CD8-positive, alpha-beta T cell (primary cell): ENCODE measurements at regions of chr4 and their contacts with region 1.

Region 1: GRCh38 chr4:102826890-102827673 is at the start of gene UBE2D3:
- DNase-seq: peak; percentile 90 to 98 (median 95)
- ATAC-seq: peak; percentile 49
- H3K4me3 ChIP-seq: peak within 1 kb of the TSS; percentile 80 to 90
- H3K4me3 Mint-ChIP-seq: no peak within 1 kb of the TSS
- H3K27ac ChIP-seq: peak within 1 kb of the TSS; percentile 99 to 100
- H3K27ac Mint-ChIP-seq: no peak within 1 kb of the TSS
- H3K4me1 ChIP-seq: peaks cover 37% of the 10 kb centered on the region
- H3K4me1 Mint-ChIP-seq: peaks cover 39% of the 10 kb centered on the region
- H3K27me3 ChIP-seq: no peaks in the 10 kb centered on the region
- H3K27me3 Mint-ChIP-seq: no peaks in the 10 kb centered on the region
- CTCF ChIP-seq: no peak
- total RNA-seq, gene UBE2D3: 752 to 758 TPM

Region 2: GRCh38 chr4:102344954-102345794 is 481.9 kb before region 1 on chr4 and contains the start of gene SLC39A8:
- CTCF ChIA-PET with region 1: no interaction called
- POLR2A ChIA-PET with region 1: interaction called, 11 read pairs
- intact Hi-C with region 1: loop called (anchors 1 to 2 kb)
- DNase-seq: peak; percentile 67 to 94 (median 84)
- ATAC-seq: peak; percentile 80
- H3K4me3 ChIP-seq: peak within 1 kb of the TSS; percentile 65 to 85
- H3K4me3 Mint-ChIP-seq: peak within 1 kb of the TSS; percentile 92
- H3K27ac ChIP-seq: peak within 1 kb of the TSS; percentile 92 to 96
- H3K27ac Mint-ChIP-seq: peak within 1 kb of the TSS; percentile 96
- H3K4me1 ChIP-seq: peaks cover 33% of the 10 kb centered on the region
- H3K4me1 Mint-ChIP-seq: peaks cover 54% of the 10 kb centered on the region
- H3K27me3 ChIP-seq: no peaks in the 10 kb centered on the region
- H3K27me3 Mint-ChIP-seq: no peaks in the 10 kb centered on the region
- CTCF ChIP-seq: peak; percentile 90
- total RNA-seq, gene SLC39A8: 19.1 to 20.0 TPM

Region 3: DNA sequence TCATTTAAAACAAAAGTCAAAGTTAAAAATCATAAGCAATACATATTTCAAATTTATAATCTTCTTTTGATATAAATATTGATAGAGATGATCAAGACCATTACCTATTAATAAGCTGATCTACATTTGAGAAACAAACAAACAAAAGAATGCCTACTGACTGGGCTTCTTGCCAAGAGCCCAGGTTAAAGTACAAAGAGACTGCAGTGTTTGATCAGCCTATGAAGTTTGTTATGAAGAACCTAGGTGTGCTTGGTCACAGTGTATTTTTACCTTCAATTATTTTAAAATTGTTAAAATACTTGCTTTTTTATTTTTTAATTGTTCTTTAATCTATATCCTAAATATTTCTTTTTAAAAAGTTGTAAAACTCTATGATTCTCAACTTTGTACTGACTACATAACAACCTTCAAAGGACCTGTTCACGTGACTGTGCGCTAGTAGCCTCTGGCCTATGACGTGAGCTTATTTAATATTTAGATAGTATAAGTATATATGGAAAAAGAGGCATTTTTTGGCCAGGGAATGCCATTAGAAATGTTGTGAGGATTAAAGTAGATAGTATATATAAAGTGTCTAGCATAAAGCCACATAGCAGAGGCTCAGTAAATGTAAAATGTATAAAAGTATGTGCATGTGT is 470.4 kb before region 1 on chr4:
- CTCF ChIA-PET with region 1: no interaction called
- POLR2A ChIA-PET with region 1: no interaction called
- intact Hi-C with region 1: no loop called
- DNase-seq: no peak
- ATAC-seq: no peak
- H3K4me3 ChIP-seq: no peak overlapping the region
- H3K4me3 Mint-ChIP-seq: no peak overlapping the region
- H3K27ac ChIP-seq: no peak overlapping the region
- H3K27ac Mint-ChIP-seq: no peak overlapping the region
- H3K4me1 ChIP-seq: no peaks in the 10 kb centered on the region
- H3K4me1 Mint-ChIP-seq: peaks cover 3% of the 10 kb centered on the region
- H3K27me3 ChIP-seq: no peaks in the 10 kb centered on the region
- H3K27me3 Mint-ChIP-seq: no peaks in the 10 kb centered on the region
- CTCF ChIP-seq: no peak

Region 4: DNA sequence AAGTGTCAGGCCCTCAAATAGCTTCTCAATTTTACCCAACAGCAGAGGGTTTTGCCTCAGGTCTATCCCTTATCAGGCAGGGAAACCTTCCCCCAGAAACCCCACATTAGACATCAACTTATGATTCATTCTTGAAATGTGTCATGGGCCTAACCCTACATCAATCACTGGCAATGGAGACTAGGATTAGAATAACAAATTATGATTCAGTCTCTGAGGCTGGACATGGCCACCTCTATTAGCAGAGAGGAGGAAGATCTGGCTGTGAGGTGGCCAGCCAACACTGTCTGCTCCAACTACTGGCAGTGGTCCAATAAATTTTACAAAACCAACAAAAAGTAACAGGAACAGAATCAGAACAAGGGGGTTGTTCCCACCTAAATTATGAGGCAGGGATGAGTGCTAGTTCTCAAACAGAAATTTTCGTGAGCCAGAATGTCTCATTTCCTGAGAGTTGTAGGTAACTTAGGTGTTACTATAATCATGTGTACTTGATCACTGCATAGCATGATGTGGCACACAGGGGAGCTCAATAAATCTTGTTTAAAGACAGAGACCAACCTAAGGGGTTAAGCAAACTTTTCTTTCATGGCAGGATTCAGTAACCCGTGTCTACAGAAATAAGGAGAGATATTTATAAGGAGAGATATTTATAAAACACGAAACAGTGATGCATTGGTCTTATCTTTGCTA is 199.1 kb before region 1 on chr4:
- CTCF ChIA-PET with region 1: interaction called, 3 read pairs
- POLR2A ChIA-PET with region 1: interaction called, 18 read pairs
- intact Hi-C with region 1: loop called in 1 of 2 experiments (anchors 2 kb)
- DNase-seq: no peak
- ATAC-seq: no peak
- H3K4me3 ChIP-seq: no peak overlapping the region
- H3K4me3 Mint-ChIP-seq: no peak overlapping the region
- H3K27ac ChIP-seq: no peak overlapping the region
- H3K27ac Mint-ChIP-seq: peak overlapping the region; percentile 74
- H3K4me1 ChIP-seq: peaks cover 64% of the 10 kb centered on the region
- H3K4me1 Mint-ChIP-seq: peaks cover 77% of the 10 kb centered on the region
- H3K27me3 ChIP-seq: no peaks in the 10 kb centered on the region
- H3K27me3 Mint-ChIP-seq: no peaks in the 10 kb centered on the region
- CTCF ChIP-seq: no peak

Region 5: GRCh38 chr4:102809190-102809589 is 17.9 kb before region 1 on chr4:
- CTCF ChIA-PET with region 1: interaction called, 5 read pairs
- POLR2A ChIA-PET with region 1: interaction called, 16 read pairs
- intact Hi-C with region 1: loop called in 1 of 2 experiments (anchors 1 kb)
- DNase-seq: peak in 1 of 9 experiments; percentile 30
- ATAC-seq: peak; percentile 77
- H3K4me3 ChIP-seq: no peak overlapping the region
- H3K4me3 Mint-ChIP-seq: peak overlapping the region; percentile 56
- H3K27ac ChIP-seq: peak overlapping the region in 1 of 2 experiments; percentile 51
- H3K27ac Mint-ChIP-seq: peak overlapping the region; percentile 74
- H3K4me1 ChIP-seq: peaks cover 64% of the 10 kb centered on the region
- H3K4me1 Mint-ChIP-seq: peaks cover 80% of the 10 kb centered on the region
- H3K27me3 ChIP-seq: no peaks in the 10 kb centered on the region
- H3K27me3 Mint-ChIP-seq: no peaks in the 10 kb centered on the region
- CTCF ChIP-seq: no peak

Region 6: DNA sequence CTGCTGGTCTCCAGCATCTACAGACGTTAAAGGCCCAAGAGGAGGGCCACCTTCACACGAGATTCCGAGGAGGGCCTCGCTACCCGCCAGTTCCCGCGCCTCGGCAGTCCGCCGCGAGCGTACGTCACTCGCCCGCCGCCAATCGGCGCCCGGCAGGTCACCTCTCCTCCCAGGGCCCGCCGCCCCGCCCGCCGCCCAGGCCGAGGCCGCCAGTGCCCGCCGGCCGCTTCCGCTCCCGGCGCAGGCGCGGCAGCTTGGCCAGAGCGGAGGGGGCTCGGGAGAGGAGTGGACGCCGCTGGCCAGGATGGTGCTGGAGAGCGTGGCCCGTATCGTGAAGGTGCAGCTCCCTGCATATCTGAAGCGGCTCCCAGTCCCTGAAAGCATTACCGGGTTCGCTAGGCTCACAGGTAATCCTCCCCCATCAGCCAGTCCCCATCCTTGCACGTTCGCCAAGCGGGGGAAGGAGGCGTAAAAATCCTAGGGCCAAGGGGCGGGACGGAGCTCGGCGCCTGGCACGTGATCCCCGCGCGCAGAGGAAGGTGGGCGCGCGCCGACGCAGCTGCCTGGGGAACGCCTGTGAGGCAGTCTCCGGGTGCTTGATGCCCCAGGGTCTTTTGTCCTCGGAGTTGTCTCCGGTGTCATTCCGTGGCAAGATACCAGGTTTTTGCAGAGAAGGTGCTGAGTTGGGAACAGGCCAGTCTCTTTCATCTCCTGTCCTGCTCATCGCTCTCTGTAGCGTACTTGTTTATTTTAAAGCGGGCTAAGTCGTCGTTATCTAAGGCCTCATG is 41.9 kb after region 1 on chr4 and contains the start of gene CISD2:
- CTCF ChIA-PET with region 1: interaction called, 8 read pairs
- POLR2A ChIA-PET with region 1: interaction called, 160 read pairs
- intact Hi-C with region 1: loop called (anchors 1 kb)
- DNase-seq: peak; percentile 83 to 97 (median 91)
- ATAC-seq: peak; percentile 81
- H3K4me3 ChIP-seq: peak within 1 kb of the TSS; percentile 74 to 77
- H3K4me3 Mint-ChIP-seq: peak within 1 kb of the TSS; percentile 89
- H3K27ac ChIP-seq: peak within 1 kb of the TSS; percentile 89 to 94
- H3K27ac Mint-ChIP-seq: peak within 1 kb of the TSS; percentile 99
- H3K4me1 ChIP-seq: peaks cover 37% of the 10 kb centered on the region
- H3K4me1 Mint-ChIP-seq: peaks cover 66% of the 10 kb centered on the region
- H3K27me3 ChIP-seq: no peaks in the 10 kb centered on the region
- H3K27me3 Mint-ChIP-seq: no peaks in the 10 kb centered on the region
- CTCF ChIP-seq: no peak
- total RNA-seq, gene CISD2: 14.3 to 14.4 TPM

Region 7: DNA sequence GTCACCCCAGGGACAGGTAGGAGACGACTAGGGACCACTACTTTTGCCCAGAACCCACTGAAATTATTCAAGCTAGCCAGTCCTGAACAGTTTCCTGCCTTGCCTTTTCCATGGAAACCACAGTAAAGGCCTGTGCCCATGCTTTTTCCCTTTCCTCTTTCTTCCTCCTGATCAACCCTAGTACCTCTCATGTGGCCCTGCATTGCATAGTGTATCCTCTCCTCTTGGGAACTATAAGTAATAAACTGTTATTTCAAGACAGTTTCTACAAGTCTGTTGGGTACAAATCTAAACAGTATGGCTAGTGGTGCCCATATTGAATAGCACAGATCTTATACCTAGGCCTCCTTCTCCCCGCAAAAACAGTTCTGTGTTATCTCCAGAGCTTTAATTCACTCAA is 56.2 kb after region 1 on chr4:
- CTCF ChIA-PET with region 1: no interaction called
- POLR2A ChIA-PET with region 1: no interaction called
- intact Hi-C with region 1: no loop called
- DNase-seq: no peak
- ATAC-seq: no peak
- H3K4me3 ChIP-seq: no peak overlapping the region
- H3K4me3 Mint-ChIP-seq: no peak overlapping the region
- H3K27ac ChIP-seq: no peak overlapping the region
- H3K27ac Mint-ChIP-seq: peak overlapping the region; percentile 81
- H3K4me1 ChIP-seq: no peaks in the 10 kb centered on the region
- H3K4me1 Mint-ChIP-seq: peaks cover 11% of the 10 kb centered on the region
- H3K27me3 ChIP-seq: no peaks in the 10 kb centered on the region
- H3K27me3 Mint-ChIP-seq: no peaks in the 10 kb centered on the region
- CTCF ChIP-seq: no peak

Region 8: GRCh38 chr4:103099691-103100392 is 272.8 kb after region 1 on chr4 and contains the start of gene BDH2:
- CTCF ChIA-PET with region 1: no interaction called
- POLR2A ChIA-PET with region 1: interaction called, 6 read pairs
- intact Hi-C with region 1: loop called in 1 of 2 experiments (anchors 5 kb)
- DNase-seq: peak in 8 of 9 experiments; percentile 3 to 91 (median 48)
- ATAC-seq: peak; percentile 99
- H3K4me3 ChIP-seq: peak within 1 kb of the TSS; percentile 51 to 60
- H3K4me3 Mint-ChIP-seq: peak within 1 kb of the TSS; percentile 85
- H3K27ac ChIP-seq: peak within 1 kb of the TSS; percentile 4 to 37
- H3K27ac Mint-ChIP-seq: peak within 1 kb of the TSS; percentile 92
- H3K4me1 ChIP-seq: peaks cover 15% of the 10 kb centered on the region
- H3K4me1 Mint-ChIP-seq: peaks cover 41% of the 10 kb centered on the region
- H3K27me3 ChIP-seq: no peaks in the 10 kb centered on the region
- H3K27me3 Mint-ChIP-seq: no peaks in the 10 kb centered on the region
- CTCF ChIP-seq: peak; percentile 78
- total RNA-seq, gene BDH2: 16.4 to 19.9 TPM